Stomach (tissue), 19 donors: ENCODE measurements at regions of chr14 and their contacts with region 1.

Region 1: GRCh38 chr14:103808403-103809001 is 38.9 kb downstream of the PPP1R13B start:
- DNase-seq: peak; percentile 84 to 92
- H3K4me3 ChIP-seq: no peak overlapping the region
- H3K27ac ChIP-seq: no peak overlapping the region
- H3K4me1 ChIP-seq: peaks cover 10 to 50% (median 27%) of the 10 kb centered on the region in 4 donors
- H3K27me3 ChIP-seq: no peaks in the 10 kb centered on the region
- CTCF ChIP-seq: peak in 5 of 7 experiments; percentile 70 to 87 (median 85)
- EP300 ChIP-seq: no peak
- POLR2A ChIP-seq: no peak

Region 2: DNA sequence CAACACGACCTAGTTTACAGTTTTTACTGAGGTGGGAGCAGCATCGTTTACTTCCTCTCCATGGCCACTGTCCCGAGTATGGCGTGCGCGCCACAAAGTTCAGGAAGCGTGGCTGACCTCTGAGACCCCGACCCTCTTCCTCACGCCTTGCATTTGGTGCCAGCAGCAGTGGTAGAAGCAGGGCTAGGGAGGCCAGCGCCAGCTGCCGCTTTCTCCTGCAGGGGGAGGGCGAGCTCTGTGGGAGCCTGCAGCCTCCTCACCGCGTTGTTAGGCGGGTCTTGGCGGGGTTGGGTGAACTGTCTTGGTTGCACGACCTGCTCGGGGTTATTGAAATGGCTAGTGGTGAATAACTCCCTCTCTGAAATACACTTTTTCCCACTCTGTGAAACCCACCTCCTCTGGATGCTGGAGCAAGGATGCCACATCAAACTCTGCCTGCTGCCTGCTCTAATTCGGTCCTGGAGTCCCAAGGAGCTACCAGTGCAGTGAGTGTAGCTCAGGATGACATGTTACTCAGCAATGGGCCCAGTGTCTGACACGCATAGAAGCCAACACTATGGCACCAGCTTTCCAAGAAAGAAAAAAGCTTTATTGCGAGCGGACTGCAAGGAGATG is 97.4 kb after region 1 on chr14:
- intact Hi-C with region 1: loop called (anchors 5 kb)
- DNase-seq: peak in 1 of 2 donors; percentile 38
- H3K4me3 ChIP-seq: no peak overlapping the region
- H3K27ac ChIP-seq: no peak overlapping the region
- H3K4me1 ChIP-seq: peaks cover 7 to 19% (median 16%) of the 10 kb centered on the region in 4 donors
- H3K27me3 ChIP-seq: peaks cover 0 to 2% (median 0%) of the 10 kb centered on the region in 3 donors
- CTCF ChIP-seq: no peak
- EP300 ChIP-seq: no peak
- POLR2A ChIP-seq: no peak

Region 3: GRCh38 chr14:103931422-103931821 is 122.9 kb after region 1 on chr14:
- intact Hi-C with region 1: no loop called
- DNase-seq: no peak
- H3K4me3 ChIP-seq: no peak overlapping the region
- H3K27ac ChIP-seq: peak overlapping the region in 1 of 5 donors; percentile 17
- H3K4me1 ChIP-seq: no peaks in the 10 kb centered on the region
- H3K27me3 ChIP-seq: peaks cover 0 to 23% (median 8%) of the 10 kb centered on the region in 3 donors
- CTCF ChIP-seq: no peak
- EP300 ChIP-seq: no peak
- POLR2A ChIP-seq: no peak